Gastrocnemius medialis (tissue), 4 donors: ENCODE measurements at regions of chr1 and their contacts with region 1.

Region 1: DNA sequence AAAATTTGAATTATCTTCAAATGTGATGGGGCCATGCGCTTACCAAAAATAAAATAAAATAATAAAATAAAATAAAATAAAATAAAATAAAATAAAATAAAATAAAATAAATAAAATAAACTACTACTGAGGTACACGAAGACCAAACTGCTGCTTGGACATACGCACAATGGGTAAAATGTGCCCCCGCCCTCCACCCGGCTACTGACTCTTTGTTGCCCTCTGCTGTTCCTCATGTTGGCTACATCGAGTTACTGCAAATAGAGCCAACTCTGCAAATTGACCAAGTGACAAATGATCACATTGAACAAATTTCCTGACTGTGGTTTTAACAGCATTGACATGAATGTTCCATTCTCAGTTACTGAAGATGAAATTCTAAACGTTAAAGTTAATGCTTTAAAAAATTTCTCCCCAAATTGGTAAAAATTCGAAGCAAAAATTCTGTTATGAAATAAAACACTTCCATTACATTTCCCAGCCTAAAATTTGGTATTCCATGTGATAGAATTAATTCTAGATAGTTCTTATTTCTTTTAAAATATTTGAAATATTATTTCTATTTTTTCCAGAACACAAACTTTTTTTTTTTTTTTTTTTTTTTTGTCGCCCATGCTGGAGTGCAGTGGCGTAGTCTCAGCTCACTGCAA is 18.8 kb upstream of the MAP1LC3C start:
- DNase-seq: peak; percentile 6 to 30
- ATAC-seq: no peak
- H3K4me3 ChIP-seq: no peak overlapping the region
- H3K27ac ChIP-seq: no peak overlapping the region
- H3K4me1 ChIP-seq: no peaks in the 10 kb centered on the region
- H3K27me3 ChIP-seq: no peaks in the 10 kb centered on the region
- CTCF ChIP-seq: peak in 2 of 5 experiments; percentile 43 to 50
- POLR2A ChIP-seq: no peak

Region 2: DNA sequence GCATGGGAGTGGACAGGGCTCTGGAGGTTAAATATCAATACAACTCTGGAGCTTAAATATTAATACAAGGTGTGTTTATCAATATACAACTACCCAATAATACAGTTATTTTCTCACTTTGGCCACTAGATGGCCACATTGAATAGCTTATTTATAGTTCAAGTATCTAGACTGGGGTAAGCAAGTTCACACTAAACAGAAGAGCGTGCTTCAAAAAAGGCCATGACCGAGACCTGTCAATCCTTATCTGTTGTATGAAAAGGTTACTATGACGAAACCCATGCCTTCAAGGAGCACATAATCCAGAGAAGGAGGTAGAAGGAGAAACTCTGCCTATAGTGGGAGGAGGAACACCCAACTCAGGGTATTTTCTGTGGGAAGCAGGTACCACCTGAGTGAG is 406.6 kb before region 1 on chr1:
- in situ Hi-C with region 1: loop called in 2 of 4 experiments (anchors 25 kb)
- intact Hi-C with region 1: loop called (anchors 5 kb)
- DNase-seq: no peak
- ATAC-seq: peak; percentile 78 to 84
- H3K4me3 ChIP-seq: no peak overlapping the region
- H3K27ac ChIP-seq: no peak overlapping the region
- H3K4me1 ChIP-seq: no peaks in the 10 kb centered on the region
- H3K27me3 ChIP-seq: no peaks in the 10 kb centered on the region
- CTCF ChIP-seq: peak; percentile 61 to 85 (median 69)
- POLR2A ChIP-seq: no peak

Region 3: DNA sequence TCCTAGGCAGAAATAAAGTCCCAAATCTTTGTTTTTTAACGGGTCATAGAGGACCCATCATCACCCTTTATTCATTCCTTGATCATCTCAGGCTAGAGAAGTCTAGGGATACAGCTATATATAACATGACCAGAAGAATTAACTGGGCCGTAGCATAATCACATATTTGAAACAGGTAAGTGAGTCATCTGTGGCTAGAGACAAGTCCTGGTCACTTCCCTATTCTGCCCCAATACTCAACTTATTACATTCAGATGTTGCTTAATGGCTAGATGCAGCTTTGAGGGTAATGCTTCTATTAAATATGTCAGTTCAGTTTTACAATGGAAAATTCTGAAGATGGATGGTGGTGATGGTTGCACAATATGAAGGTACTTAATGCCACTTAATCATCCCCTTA is 122.7 kb before region 1 on chr1:
- in situ Hi-C with region 1: no loop called
- intact Hi-C with region 1: loop called (anchors 10 kb)
- DNase-seq: no peak
- ATAC-seq: no peak
- H3K4me3 ChIP-seq: no peak overlapping the region
- H3K27ac ChIP-seq: no peak overlapping the region
- H3K4me1 ChIP-seq: no peaks in the 10 kb centered on the region
- H3K27me3 ChIP-seq: no peaks in the 10 kb centered on the region
- CTCF ChIP-seq: no peak
- POLR2A ChIP-seq: no peak

Region 4: GRCh38 chr1:241998412-241998921 is 19.2 kb before region 1 on chr1:
- in situ Hi-C with region 1: no loop called
- intact Hi-C with region 1: no loop called
- DNase-seq: peak; percentile 51 to 72
- ATAC-seq: peak; percentile 56 to 87
- H3K4me3 ChIP-seq: peak overlapping the region in 3 of 4 donors; percentile 15 to 35 (median 31)
- H3K27ac ChIP-seq: peak overlapping the region in 2 of 4 donors; percentile 39 to 46
- H3K4me1 ChIP-seq: peaks cover 0 to 5% of the 10 kb centered on the region in 2 donors
- H3K27me3 ChIP-seq: no peaks in the 10 kb centered on the region
- CTCF ChIP-seq: peak in 4 of 5 experiments; percentile 20 to 37 (median 24)
- POLR2A ChIP-seq: no peak